Activated naive CD8-positive, alpha-beta T cell treated with anti-CD3 and anti-CD28 coated beads, Interleukin-2, amount 10 ng/mL, durations not matched to agents 7 days and 5 days (primary cell): ENCODE measurements at regions of chr9 and their contacts with region 1.

Region 1: DNA sequence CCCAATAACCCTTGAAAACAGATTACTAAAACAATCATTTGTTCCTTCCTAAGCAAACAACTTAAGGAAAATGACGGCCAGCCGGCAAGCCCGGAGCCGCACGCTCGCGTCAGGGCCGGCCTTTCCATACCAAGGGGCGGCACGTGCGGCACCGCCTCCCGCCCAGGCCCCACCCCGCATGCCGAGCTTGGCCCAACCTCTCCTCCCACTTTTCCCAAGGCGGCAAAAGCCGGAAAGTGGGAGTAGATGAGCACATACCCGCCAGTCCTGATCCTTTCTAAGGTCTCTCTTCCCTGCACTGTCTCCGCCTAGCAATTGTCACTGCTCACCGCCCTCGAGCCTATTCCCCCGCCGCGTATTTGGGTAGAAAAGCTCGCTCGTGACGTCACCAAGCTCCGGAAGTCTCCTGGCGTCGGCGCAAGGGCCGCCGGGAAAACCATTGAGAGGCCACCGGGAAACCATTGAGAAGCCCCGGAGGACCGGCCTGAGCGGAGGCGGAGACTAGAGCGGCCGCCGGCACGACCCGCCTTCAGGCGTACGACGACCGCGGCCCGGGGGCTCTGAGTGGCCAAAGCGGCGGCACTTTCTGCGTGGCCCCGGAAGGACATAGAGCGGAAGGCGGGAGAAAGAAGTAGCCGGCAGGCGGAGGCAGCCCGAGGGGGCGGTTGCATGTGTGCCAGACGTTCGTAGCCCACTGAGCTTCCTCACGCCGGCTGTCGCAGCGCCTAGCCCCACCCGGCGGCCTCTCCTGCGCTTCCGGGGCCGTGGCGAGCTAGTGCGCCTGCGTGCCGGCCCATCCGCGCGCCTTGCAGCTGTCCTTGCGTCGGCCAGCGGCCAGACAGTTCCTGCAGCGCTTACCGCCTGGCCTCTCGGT is at the starts of genes NCBP1 and TSTD2:
- DNase-seq: peak; percentile 94
- ATAC-seq: peak; percentile 92
- H3K4me3 Mint-ChIP-seq: peak within 1 kb of the TSS; percentile 99
- H3K27ac Mint-ChIP-seq: peak within 1 kb of the TSS; percentile 100
- H3K4me1 Mint-ChIP-seq: peaks cover 44% of the 10 kb centered on the region
- H3K27me3 Mint-ChIP-seq: no peaks in the 10 kb centered on the region
- total RNA-seq, gene NCBP1: 37.3 to 41.3 TPM
- total RNA-seq, gene TSTD2: 17.0 to 19.6 TPM

Region 2: DNA sequence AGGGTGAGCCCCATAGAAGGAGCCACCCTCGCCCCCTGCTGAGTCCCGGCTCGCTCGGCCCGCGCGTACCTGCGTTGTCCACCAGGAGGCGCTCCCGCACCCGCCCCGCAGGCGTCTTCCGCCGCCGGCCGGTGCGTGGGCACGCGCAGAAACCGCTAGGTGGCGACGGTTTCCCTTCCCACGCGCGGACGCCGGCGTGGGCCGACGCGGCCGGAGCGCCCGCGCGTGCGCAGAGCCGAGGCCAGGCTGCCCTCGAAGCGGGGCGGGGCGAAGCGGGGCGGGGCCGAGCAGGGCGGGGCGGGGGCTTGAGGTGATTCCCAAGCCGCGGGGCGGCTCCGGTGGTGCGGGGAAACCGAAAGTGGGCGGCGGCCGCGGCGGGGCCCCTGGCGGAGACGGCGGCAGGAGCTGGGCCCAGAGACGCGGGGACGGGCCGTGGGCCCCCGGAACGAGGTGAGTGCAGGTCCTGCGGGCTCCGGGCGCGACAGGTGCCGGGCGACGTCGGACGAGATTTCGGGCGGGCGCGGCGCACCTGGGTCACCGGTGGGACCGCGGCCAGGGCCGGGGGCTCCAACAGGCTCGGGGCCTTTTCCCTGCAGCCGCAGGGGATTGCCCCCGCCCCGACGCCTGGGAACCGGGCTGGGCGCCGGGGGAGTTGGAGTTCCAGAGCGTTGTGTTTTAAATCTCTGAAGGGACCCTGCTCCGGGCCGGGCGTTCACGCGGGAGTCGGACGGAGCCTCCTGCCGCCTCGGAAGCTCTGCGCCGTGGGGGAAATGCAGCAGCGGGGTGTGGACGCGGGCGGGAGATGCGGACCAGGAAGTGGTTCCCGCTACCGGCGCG is 221.2 kb before region 1 on chr9 and contains the start of gene TDRD7:
- POLR2A ChIA-PET with region 1: interaction called, 10 read pairs
- DNase-seq: peak; percentile 94
- ATAC-seq: peak; percentile 85
- H3K4me3 Mint-ChIP-seq: peak within 1 kb of the TSS; percentile 88
- H3K27ac Mint-ChIP-seq: peak within 1 kb of the TSS; percentile 80
- H3K4me1 Mint-ChIP-seq: peaks cover 23% of the 10 kb centered on the region
- H3K27me3 Mint-ChIP-seq: peaks cover 21% of the 10 kb centered on the region
- total RNA-seq, gene TDRD7: 13.8 to 14.5 TPM

Region 3: DNA sequence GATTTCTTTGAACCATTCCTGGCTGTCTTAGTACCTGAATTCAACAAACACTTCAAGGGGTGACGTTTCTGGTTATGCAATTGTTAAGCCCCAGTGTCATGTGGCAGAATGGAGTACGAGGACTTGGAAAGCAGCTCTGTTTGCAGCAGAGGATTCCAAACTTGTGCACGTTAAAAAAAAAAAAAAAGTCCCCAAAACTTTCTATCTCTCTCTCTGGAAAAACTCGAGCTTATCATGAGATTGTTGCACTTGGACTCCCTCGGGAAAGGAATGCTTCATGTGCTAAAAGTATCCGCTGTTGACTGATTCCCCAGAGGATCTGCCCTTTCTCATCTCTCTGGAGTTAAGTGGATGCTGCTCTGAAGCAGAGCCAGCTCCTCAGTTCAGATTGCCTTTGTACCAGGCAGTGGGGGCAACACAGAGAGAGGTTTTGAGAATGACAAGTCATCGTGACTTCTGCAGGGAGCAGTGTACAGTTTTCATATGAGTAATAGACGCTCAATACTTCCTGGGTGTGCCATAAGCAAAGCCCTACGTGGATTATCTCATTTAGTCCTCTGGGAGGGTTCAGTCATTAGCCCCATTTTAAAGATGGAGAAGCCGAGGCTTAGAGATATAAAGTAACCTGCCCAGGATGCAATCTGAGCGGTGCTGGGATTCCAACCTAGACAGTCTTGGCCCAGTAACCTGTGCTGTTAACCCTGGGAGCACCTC is 103.7 kb before region 1 on chr9:
- POLR2A ChIA-PET with region 1: no interaction called
- DNase-seq: no peak
- ATAC-seq: no peak
- H3K4me3 Mint-ChIP-seq: no peak overlapping the region
- H3K27ac Mint-ChIP-seq: no peak overlapping the region
- H3K4me1 Mint-ChIP-seq: no peaks in the 10 kb centered on the region
- H3K27me3 Mint-ChIP-seq: peaks cover 9% of the 10 kb centered on the region

Region 4: DNA sequence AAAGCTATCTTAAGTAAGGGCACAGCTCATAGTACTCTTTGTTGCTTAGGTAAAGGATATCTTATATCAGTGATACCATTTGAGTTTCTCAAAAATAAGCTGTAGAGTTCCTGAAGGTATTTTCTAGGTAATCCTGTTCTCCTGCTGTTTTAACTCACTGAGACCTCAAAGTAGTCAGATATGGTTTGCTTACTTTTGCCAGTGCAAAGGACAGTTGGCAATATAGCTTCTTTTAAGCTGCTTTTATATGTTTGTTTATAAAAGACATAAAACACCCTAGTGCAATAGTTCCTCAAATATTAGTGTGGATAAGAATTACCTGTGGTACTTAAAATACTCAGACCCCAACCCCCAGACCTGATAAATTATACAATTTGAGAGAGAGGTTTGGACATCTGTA is 12.5 kb after region 1 on chr9:
- POLR2A ChIA-PET with region 1: interaction called, 14 read pairs
- DNase-seq: no peak
- ATAC-seq: no peak
- H3K4me3 Mint-ChIP-seq: no peak overlapping the region
- H3K27ac Mint-ChIP-seq: no peak overlapping the region
- H3K4me1 Mint-ChIP-seq: peaks cover 3% of the 10 kb centered on the region
- H3K27me3 Mint-ChIP-seq: no peaks in the 10 kb centered on the region

Region 5: DNA sequence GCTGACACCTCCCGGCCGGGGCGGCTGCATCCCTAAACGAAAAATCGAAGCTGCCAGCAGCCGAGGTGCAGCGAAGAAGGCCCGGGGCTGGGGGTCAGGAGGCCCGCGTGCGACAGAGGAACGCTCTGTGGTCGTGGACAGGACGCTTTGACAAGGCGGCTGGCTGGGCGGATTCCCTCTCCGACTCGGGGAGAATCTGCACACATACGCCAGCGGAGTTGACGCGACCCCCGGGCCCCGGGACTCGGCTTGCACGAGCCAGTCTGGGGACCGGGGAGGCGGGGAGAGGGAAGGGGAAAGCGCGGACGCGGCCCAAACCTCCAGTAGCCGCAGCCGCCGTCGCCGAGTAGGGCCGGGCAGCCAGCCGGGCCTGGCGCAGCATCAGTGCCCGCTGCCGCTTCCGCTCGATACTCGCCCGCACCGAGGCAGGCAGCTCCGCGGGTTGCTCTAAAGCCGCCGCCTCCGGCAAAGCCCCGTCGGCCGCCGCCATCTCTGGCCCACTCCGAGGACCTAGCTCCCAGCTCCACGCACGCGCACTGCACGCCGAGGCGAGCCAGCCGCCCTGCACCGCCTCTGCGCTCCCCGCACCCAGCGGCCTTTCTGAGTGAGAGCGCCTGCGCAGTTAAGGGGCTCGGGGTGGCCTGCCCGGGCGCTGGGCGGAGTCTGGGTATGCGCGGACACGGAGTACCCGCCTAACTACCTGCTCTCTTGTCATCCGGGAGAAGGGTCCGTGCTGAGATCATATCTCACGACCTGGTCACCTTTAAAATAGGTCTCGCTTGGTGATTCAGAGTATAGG is 63.8 kb after region 1 on chr9 and contains the start of gene XPA:
- POLR2A ChIA-PET with region 1: interaction called, 27 read pairs
- DNase-seq: peak; percentile 97
- ATAC-seq: peak; percentile 97
- H3K4me3 Mint-ChIP-seq: peak within 1 kb of the TSS; percentile 85
- H3K27ac Mint-ChIP-seq: peak within 1 kb of the TSS; percentile 91
- H3K4me1 Mint-ChIP-seq: peaks cover 45% of the 10 kb centered on the region
- H3K27me3 Mint-ChIP-seq: peaks cover 4% of the 10 kb centered on the region
- total RNA-seq, gene XPA: 15.4 to 18.6 TPM